Caco-2 (cell line): ENCODE measurements at regions of chr1 and their contacts with region 1.

Region 1: DNA sequence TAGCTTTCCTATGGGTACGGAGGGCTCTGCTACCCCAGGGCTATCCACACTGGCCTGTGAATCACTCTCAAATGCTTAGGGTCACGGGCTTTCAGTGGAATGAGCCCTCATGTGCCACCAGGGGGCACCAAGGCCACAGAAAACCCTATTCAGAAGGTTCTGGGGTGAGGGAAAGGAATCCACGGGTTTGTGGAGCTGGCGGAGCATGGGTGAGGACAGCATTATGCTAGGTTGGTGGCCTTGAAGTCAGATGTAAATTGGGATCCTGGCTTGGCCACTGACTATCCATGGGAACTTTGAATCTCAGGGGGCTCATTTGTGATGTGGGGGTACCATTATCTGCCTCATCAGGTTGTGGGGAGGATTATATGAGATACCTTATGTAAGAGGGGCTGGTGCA is 5.1 kb upstream of the LAMTOR5 start:
- DNase-seq: peak; percentile 65 to 74
- H3K4me3 ChIP-seq: no peak overlapping the region
- H3K4me3 Mint-ChIP-seq: no peak overlapping the region
- H3K27ac Mint-ChIP-seq: no peak overlapping the region
- H3K4me1 ChIP-seq: peaks cover 7% of the 10 kb centered on the region; the same call in 1 of the 2 replicates
- H3K4me1 Mint-ChIP-seq: peaks cover 7% of the 10 kb centered on the region
- H3K27me3 ChIP-seq: no peaks in the 10 kb centered on the region
- H3K27me3 Mint-ChIP-seq: no peaks in the 10 kb centered on the region
- CTCF ChIP-seq: peak; percentile 65 to 75

Region 2: GRCh38 chr1:110218739-110219138 is 193.8 kb before region 1 on chr1:
- CTCF ChIA-PET with region 1: no interaction called
- POLR2A ChIA-PET with region 1: no interaction called
- intact Hi-C with region 1: no loop called
- DNase-seq: peak in 1 of 2 experiments; percentile 12
- H3K4me3 ChIP-seq: no peak overlapping the region
- H3K4me3 Mint-ChIP-seq: no peak overlapping the region
- H3K27ac Mint-ChIP-seq: no peak overlapping the region
- H3K4me1 ChIP-seq: no peaks in the 10 kb centered on the region
- H3K4me1 Mint-ChIP-seq: no peaks in the 10 kb centered on the region
- H3K27me3 ChIP-seq: no peaks in the 10 kb centered on the region
- H3K27me3 Mint-ChIP-seq: no peaks in the 10 kb centered on the region
- CTCF ChIP-seq: no peak

Region 3: DNA sequence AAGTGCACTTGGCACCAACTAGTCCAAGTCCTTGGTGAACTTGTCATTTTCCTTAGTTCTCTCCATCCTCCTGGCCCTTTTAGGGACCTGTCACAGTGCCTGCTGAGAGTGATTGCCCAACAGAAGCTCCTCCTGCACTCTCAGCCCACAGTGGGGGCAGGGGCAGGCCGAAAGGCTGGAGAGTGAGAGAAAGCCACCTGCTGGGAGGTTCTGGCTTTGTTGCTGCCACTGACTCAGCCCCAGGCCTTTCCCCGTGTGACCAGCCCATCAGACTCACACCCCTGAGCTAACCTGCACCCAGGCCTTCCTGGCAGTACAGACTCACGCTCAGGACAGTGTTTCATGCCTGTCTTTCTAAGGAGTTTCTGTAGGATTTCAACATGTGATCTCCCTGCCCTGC is 21.2 kb after region 1 on chr1:
- CTCF ChIA-PET with region 1: interaction called, 34 read pairs
- POLR2A ChIA-PET with region 1: no interaction called
- intact Hi-C with region 1: loop called (anchors 1 kb)
- DNase-seq: peak; percentile 77 to 81
- H3K4me3 ChIP-seq: no peak overlapping the region
- H3K4me3 Mint-ChIP-seq: no peak overlapping the region
- H3K27ac Mint-ChIP-seq: no peak overlapping the region
- H3K4me1 ChIP-seq: peaks cover 27% of the 10 kb centered on the region
- H3K4me1 Mint-ChIP-seq: peaks cover 19% of the 10 kb centered on the region
- H3K27me3 ChIP-seq: no peaks in the 10 kb centered on the region
- H3K27me3 Mint-ChIP-seq: no peaks in the 10 kb centered on the region
- CTCF ChIP-seq: peak; percentile 40 to 46